ENCODE measurements at regions of chr17 and their contacts with region 1.

Region 1: GRCh38 chr17:81553018-81553615 is 964 bp upstream of the FAAP100 start:
- DNase-seq: peak; percentile 92
- H3K4me3 Mint-ChIP-seq: peak overlapping the region; percentile 82
- H3K27ac Mint-ChIP-seq: peak overlapping the region; percentile 81
- H3K4me1 Mint-ChIP-seq: peaks cover 6% of the 10 kb centered on the region
- H3K27me3 Mint-ChIP-seq: no peaks in the 10 kb centered on the region
- CTCF ChIP-seq: no peak

Region 2: DNA sequence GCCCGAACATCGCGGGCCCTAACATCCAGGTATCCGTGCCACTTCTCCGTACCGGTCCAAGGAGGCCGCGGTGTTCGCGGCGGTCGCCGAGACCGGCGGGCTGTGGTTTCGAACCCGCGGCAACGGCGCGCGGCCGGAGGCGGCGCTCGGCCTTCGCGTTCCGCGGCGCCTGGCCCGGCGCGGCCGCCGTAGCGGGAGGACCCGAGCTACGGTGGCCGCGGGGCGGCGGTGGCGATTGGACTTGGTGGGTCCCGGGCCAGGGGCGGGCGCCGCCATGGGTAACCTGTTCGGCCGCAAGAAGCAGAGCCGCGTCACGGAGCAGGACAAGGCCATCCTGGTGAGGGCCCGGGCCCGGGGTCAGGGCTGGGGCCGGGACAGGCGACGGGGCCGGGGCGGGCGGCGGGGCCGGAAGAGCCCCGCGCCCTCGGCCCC is 561.5 kb before region 1 on chr17 and contains the start of gene CHMP6:
- CTCF ChIA-PET with region 1: no interaction called
- POLR2A ChIA-PET with region 1: no interaction called
- intact Hi-C with region 1: no loop called
- DNase-seq: peak; percentile 69
- H3K4me3 Mint-ChIP-seq: peak within 1 kb of the TSS; percentile 69
- H3K27ac Mint-ChIP-seq: peak within 1 kb of the TSS; percentile 74
- H3K4me1 Mint-ChIP-seq: no peaks in the 10 kb centered on the region
- H3K27me3 Mint-ChIP-seq: no peaks in the 10 kb centered on the region
- CTCF ChIP-seq: no peak
- total RNA-seq, gene CHMP6: 19.5 and 22.6 TPM in 2 replicates

Region 3: DNA sequence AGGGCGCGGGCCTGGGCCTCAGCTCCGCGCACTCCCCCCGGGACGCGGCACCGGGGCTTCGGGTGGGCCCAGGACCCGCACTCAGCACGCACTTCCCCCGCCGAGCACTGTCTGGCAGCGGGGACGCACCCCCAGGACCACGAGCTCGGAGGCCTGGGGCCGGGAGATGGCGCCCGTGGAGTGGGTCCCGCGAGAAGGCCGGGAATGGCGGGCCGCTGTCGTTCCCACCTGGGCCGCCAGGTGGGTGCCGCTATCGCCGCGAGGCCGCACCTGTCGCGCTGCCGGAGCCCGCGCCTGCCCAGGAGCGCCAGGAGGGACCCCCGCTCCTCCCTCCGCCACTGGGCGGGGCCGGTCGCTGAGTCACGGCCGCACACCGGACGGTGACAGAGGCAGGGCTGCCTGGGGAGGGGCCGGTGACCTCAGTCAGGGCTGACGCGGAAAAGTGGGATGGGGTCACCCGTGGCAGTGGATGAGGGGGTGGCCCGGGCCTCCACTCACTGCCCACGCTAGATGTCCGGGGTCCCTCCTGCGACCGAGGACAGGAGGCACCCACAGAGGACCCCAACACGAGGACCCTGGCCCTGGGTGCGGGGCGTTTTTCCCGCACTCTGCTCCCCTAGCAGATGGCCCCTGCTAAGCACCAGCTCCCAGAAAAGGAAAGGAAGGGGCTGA is 33.7 kb before region 1 on chr17:
- CTCF ChIA-PET with region 1: no interaction called
- POLR2A ChIA-PET with region 1: interaction called, 25 read pairs
- intact Hi-C with region 1: loop called (anchors 2 kb)
- DNase-seq: peak; percentile 50
- H3K4me3 Mint-ChIP-seq: peak overlapping the region; percentile 49
- H3K27ac Mint-ChIP-seq: peak overlapping the region; percentile 42
- H3K4me1 Mint-ChIP-seq: no peaks in the 10 kb centered on the region
- H3K27me3 Mint-ChIP-seq: no peaks in the 10 kb centered on the region
- CTCF ChIP-seq: peak; percentile 53

Region 4: GRCh38 chr17:81576621-81577277 is 23.6 kb after region 1 on chr17:
- CTCF ChIA-PET with region 1: no interaction called
- POLR2A ChIA-PET with region 1: interaction called, 17 read pairs
- intact Hi-C with region 1: loop called (anchors 1 kb)
- DNase-seq: peak; percentile 79
- H3K4me3 Mint-ChIP-seq: peak overlapping the region; percentile 51
- H3K27ac Mint-ChIP-seq: peak overlapping the region; percentile 71
- H3K4me1 Mint-ChIP-seq: peaks cover 44% of the 10 kb centered on the region
- H3K27me3 Mint-ChIP-seq: no peaks in the 10 kb centered on the region
- CTCF ChIP-seq: no peak

Region 5: GRCh38 chr17:81621494-81622130 is 68.5 kb after region 1 on chr17:
- CTCF ChIA-PET with region 1: no interaction called
- POLR2A ChIA-PET with region 1: no interaction called
- intact Hi-C with region 1: no loop called
- DNase-seq: no peak
- H3K4me3 Mint-ChIP-seq: no peak overlapping the region
- H3K27ac Mint-ChIP-seq: no peak overlapping the region
- H3K4me1 Mint-ChIP-seq: no peaks in the 10 kb centered on the region
- H3K27me3 Mint-ChIP-seq: no peaks in the 10 kb centered on the region
- CTCF ChIP-seq: no peak

Region 6: GRCh38 chr17:81636505-81637288 is 83.6 kb after region 1 on chr17 and contains the starts of genes NPLOC4 and TSPAN10:
- CTCF ChIA-PET with region 1: interaction called, 3 read pairs
- POLR2A ChIA-PET with region 1: interaction called, 11 read pairs
- intact Hi-C with region 1: no loop called
- DNase-seq: peak; percentile 86
- H3K4me3 Mint-ChIP-seq: peak within 1 kb of the TSS; percentile 89
- H3K27ac Mint-ChIP-seq: peak within 1 kb of the TSS; percentile 96
- H3K4me1 Mint-ChIP-seq: peaks cover 9% of the 10 kb centered on the region
- H3K27me3 Mint-ChIP-seq: no peaks in the 10 kb centered on the region
- CTCF ChIP-seq: no peak
- total RNA-seq, gene NPLOC4: 83.9 and 95.1 TPM in 2 replicates
- total RNA-seq, gene TSPAN10: 1.8 and 2.1 TPM in 2 replicates

Region 7: GRCh38 chr17:81702971-81703746 is 150.0 kb after region 1 on chr17 and contains the start of gene MRPL12:
- CTCF ChIA-PET with region 1: no interaction called
- POLR2A ChIA-PET with region 1: interaction called, 12 read pairs
- intact Hi-C with region 1: no loop called
- DNase-seq: peak; percentile 90
- H3K4me3 Mint-ChIP-seq: peak within 1 kb of the TSS; percentile 98
- H3K27ac Mint-ChIP-seq: peak within 1 kb of the TSS; percentile 97
- H3K4me1 Mint-ChIP-seq: peaks cover 12% of the 10 kb centered on the region
- H3K27me3 Mint-ChIP-seq: no peaks in the 10 kb centered on the region
- CTCF ChIP-seq: no peak
- total RNA-seq, gene MRPL12: 82.6 and 143 TPM in 2 replicates

Measured in MCF 10A (cell line).